A549 (cell line): ENCODE measurements at regions of chr5 and their contacts with region 1.

Region 1: GRCh38 chr5:134527146-134527960 is 1.9 kb downstream of the JADE2 start:
- DNase-seq: peak; percentile 94
- ATAC-seq: peak; percentile 64 to 77
- H3K4me3 ChIP-seq: peak overlapping the region; percentile 82
- H3K27ac ChIP-seq: peak overlapping the region; percentile 99 to 100
- H3K4me1 ChIP-seq: peaks cover 61% of the 10 kb centered on the region
- CTCF ChIP-seq: peak; percentile 67
- EP300 ChIP-seq: no peak
- POLR2A ChIP-seq: peak; percentile 34; the same call in 1 of the 2 replicates
- RAD21 ChIP-seq: peak; percentile 51 to 55; a peak in 4 of 5 replicates

Region 2: DNA sequence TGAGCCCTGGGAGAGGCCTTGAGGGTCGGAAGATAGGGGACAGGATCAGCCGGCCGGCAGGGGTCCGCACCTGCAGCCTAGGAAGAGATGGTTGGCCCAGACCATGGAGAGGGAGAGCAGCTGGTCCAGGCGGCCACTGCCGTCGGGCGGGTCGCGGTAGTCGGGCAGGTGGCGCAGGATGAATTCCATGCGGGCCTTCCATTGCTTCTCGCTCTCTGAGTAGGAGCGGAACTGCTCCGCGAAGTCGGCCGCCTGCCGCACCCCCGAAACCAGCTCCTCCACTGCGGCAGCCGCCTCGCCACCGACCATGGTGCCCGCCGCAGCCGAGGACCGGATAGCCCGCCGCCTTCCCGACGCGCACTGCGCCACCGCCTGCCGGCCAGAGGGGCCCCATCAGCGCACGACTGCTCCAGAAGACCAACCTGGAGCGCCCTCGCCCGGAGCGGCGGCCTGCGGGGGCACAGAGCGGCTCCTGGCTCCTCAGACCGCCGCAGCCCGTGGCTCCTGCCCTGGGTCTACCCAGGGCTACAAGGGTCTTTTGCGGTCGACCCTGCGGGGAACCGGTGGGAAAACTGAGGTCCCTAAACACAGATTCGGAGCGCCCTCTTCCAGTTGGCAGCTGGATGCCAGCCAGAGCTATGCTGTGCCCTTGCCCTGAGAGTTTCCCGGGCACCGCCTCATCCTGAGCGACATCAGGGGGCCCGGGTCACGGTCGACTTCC is 115.6 kb before region 1 on chr5 and contains the start of gene CDKN2AIPNL:
- CTCF ChIA-PET with region 1: interaction called, 103 read pairs
- POLR2A ChIA-PET with region 1: interaction called, 23 read pairs
- DNase-seq: peak; percentile 88 to 94
- ATAC-seq: peak; percentile 99
- H3K4me3 ChIP-seq: peak within 1 kb of the TSS; percentile 61
- H3K27ac ChIP-seq: peak within 1 kb of the TSS; percentile 93 to 94
- H3K4me1 ChIP-seq: peaks cover 36% of the 10 kb centered on the region
- CTCF ChIP-seq: peak; percentile 76
- EP300 ChIP-seq: no peak
- POLR2A ChIP-seq: peak; percentile 83
- RAD21 ChIP-seq: peak; percentile 67 to 87
- polyA plus RNA-seq, gene CDKN2AIPNL: 42.4 and 49.9 TPM in 2 replicates

Region 3: DNA sequence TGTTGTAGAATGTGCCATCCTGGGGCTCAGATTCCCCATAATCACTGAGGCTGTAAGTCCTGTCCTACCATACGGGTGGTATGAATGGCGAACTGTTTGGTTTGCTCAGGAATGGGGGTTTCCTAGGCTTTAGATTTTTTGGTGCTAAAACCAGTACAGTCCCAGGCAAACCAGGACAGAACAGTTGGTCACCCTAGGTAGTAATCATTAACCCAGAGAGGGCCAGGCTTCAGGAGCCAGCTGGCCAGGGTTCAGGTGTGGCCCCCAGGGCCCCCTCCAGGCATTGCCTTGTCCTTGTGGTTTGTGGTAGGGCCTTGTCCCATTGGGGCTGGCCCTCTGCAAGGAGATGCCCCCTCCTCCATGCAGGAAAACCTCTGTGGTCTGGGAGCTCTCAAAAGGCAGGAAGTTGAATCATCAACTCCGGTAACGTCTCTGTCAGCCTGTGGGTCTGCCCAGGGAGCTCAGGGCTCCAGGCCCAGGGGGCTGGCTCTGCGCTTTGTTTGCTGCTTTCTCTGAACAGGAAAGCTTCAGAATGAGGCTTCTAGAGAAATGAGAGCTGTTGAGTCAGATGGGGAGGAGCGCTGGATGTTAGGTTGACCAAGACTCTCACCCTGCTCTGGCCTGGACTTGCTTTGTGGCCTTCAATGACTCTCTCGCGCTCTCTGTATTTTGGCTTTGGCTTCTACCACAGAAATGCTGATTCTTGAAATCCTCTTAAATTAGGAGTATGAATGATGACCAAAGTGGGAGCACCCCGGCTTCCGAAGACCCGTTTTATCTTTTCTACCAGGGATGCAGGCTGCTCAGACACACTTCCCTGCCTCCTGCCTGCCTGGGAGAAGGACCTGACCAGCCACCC is 24.0 kb before region 1 on chr5:
- CTCF ChIA-PET with region 1: interaction called, 8 read pairs
- POLR2A ChIA-PET with region 1: interaction called, 38 read pairs
- DNase-seq: peak; percentile 80 to 92
- ATAC-seq: peak; percentile 60 to 73
- H3K4me3 ChIP-seq: no peak overlapping the region
- H3K27ac ChIP-seq: peak overlapping the region; percentile 93 to 94
- H3K4me1 ChIP-seq: peaks cover 59% of the 10 kb centered on the region
- CTCF ChIP-seq: no peak
- EP300 ChIP-seq: 0 out of 5 replicates have a peak, but pooled peaks of 1 of the 2 experiments have one; percentile 26
- POLR2A ChIP-seq: peak; percentile 15; the same call in 1 of the 2 replicates
- RAD21 ChIP-seq: peak; percentile 35 to 36; a peak in 3 of 5 replicates

Region 4: GRCh38 chr5:134555890-134556311 is 28.5 kb after region 1 on chr5:
- CTCF ChIA-PET with region 1: interaction called, 29 read pairs
- POLR2A ChIA-PET with region 1: interaction called, 7 read pairs
- DNase-seq: peak; percentile 90 to 92
- ATAC-seq: peak; percentile 57 to 78
- H3K4me3 ChIP-seq: no peak overlapping the region
- H3K27ac ChIP-seq: peak overlapping the region; percentile 79 to 88
- H3K4me1 ChIP-seq: peaks cover 62% of the 10 kb centered on the region
- CTCF ChIP-seq: no peak
- EP300 ChIP-seq: no peak
- POLR2A ChIP-seq: no peak
- RAD21 ChIP-seq: 0 out of 5 replicates have a peak, but pooled peaks of 1 of the 2 experiments have one; percentile 7

Region 5: DNA sequence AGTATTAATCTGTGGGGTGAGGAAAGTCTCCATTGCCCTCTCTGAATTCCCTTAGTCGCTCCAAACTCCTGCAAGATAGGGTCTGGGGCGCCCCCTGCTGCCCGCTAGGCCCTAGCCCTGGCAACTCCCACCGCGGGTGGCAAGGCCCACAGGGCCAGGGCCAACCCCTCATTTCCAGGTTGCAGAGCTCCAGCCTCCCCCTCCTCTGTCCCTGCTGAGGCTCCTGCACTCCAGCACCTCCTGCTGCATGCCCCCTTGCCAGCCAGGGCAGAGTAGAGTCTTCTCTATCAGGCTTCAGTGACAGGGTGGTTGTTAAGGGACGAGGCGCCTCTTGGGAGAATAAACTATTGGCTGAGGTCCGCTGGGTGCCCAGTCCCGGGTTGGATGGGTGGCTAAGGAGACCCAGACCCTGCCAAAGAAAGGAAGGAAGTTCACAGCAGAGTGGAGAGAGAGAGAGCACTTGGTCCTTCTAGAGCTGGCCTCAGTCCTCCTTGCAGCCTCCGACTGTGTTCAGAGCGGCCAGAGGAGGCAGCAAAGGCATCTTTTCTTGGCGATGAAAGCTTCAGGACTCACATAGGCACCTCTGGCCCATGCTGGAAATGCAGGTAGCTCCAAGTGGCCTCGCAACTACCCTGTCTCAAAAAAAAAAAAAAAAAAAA is 59.6 kb after region 1 on chr5:
- CTCF ChIA-PET with region 1: interaction called, 52 read pairs
- POLR2A ChIA-PET with region 1: interaction called, 3 read pairs
- DNase-seq: peak; percentile 89 to 93
- ATAC-seq: peak; percentile 94
- H3K4me3 ChIP-seq: no peak overlapping the region
- H3K27ac ChIP-seq: peak overlapping the region; percentile 62 to 73
- H3K4me1 ChIP-seq: peaks cover 12% of the 10 kb centered on the region
- CTCF ChIP-seq: peak; percentile 94
- EP300 ChIP-seq: no peak
- POLR2A ChIP-seq: no peak
- RAD21 ChIP-seq: peak; percentile 90 to 95